Stomach (tissue), 19 donors: ENCODE measurements at regions of chr19 and their contacts with region 1.

Region 1: GRCh38 chr19:8334458-8335342 is 8.4 kb downstream of the KANK3 start:
- DNase-seq: peak; percentile 72 to 89
- H3K4me3 ChIP-seq: peak overlapping the region; percentile 38 to 51 (median 40)
- H3K27ac ChIP-seq: no peak overlapping the region
- H3K4me1 ChIP-seq: peaks cover 20 to 35% (median 31%) of the 10 kb centered on the region in 4 donors
- H3K27me3 ChIP-seq: peaks cover 24 to 83% (median 30%) of the 10 kb centered on the region in 3 donors
- CTCF ChIP-seq: no peak
- EP300 ChIP-seq: no peak
- POLR2A ChIP-seq: no peak

Region 2: DNA sequence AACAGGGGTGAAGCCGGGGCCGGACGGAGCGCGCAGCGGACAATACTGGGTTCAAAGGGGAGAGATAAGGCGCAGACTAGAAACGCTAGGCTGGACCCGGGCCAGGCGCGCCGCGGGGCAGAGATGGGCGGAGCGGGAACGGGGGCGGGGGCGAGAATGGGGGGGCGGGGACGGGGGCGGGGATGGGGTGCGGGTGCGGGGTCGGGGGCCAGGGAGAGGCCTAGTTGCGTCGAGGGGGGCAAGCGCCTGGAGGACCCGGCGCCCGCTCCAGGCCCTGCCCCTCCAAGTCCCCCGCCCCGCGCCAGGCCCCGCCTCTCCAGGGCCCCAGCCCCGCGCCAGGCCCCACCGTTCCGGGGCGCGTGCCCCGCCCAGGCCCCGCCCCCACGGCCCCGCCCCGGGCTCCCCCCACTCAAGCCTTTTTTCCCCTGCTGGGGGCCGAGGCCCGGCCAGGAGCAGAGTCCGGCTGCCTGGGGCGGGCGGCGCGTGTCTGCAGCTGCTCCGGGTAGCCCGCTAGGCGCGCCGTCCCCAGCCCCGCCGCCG is 125.7 kb before region 1 on chr19 and contains the start of gene CERS4:
- intact Hi-C with region 1: no loop called
- DNase-seq: peak; percentile 81 to 92
- H3K4me3 ChIP-seq: peak within 1 kb of the TSS; percentile 66 to 83 (median 73)
- H3K27ac ChIP-seq: peak within 1 kb of the TSS; percentile 77 to 86 (median 84)
- H3K4me1 ChIP-seq: peaks cover 13 to 47% (median 41%) of the 10 kb centered on the region in 4 donors
- H3K27me3 ChIP-seq: peaks cover 0 to 25% (median 0%) of the 10 kb centered on the region in 3 donors
- CTCF ChIP-seq: no peak
- EP300 ChIP-seq: no peak
- POLR2A ChIP-seq: no peak
- total RNA-seq, gene CERS4: 1.7 to 124 (median 39.0) TPM

Region 3: GRCh38 chr19:8513687-8514504 is 179.2 kb after region 1 on chr19 and contains the start of gene ZNF414:
- intact Hi-C with region 1: loop called (anchors 5 kb)
- DNase-seq: peak; percentile 98
- H3K4me3 ChIP-seq: peak within 1 kb of the TSS; percentile 45 to 72 (median 63)
- H3K27ac ChIP-seq: peak within 1 kb of the TSS; percentile 96 to 100 (median 99)
- H3K4me1 ChIP-seq: peaks cover 18 to 57% (median 28%) of the 10 kb centered on the region in 4 donors
- H3K27me3 ChIP-seq: no peaks in the 10 kb centered on the region
- CTCF ChIP-seq: no peak
- EP300 ChIP-seq: no peak
- POLR2A ChIP-seq: peak in 2 of 4 donors; percentile 51 to 85
- total RNA-seq, gene ZNF414: 1.8 to 28.4 (median 16.5) TPM